HEK293 (cell line): ENCODE measurements at regions of chr2 and their contacts with region 1.

Region 1: GRCh38 chr2:199861132-199861774 is 10.3 kb upstream of the FTCDNL1 start:
- H3K4me3 ChIP-seq: no peak overlapping the region
- H3K27ac ChIP-seq: no peak overlapping the region
- H3K4me1 ChIP-seq: no peaks in the 10 kb centered on the region
- CTCF ChIP-seq: no peak

Region 2: GRCh38 chr2:199693861-199694260 is 167.4 kb before region 1 on chr2:
- CTCF ChIA-PET with region 1: interaction called, 10 read pairs
- POLR2A ChIA-PET with region 1: no interaction called
- H3K4me3 ChIP-seq: no peak overlapping the region
- H3K27ac ChIP-seq: no peak overlapping the region
- H3K4me1 ChIP-seq: peaks cover 3% of the 10 kb centered on the region; the same call in 1 of the 2 replicates
- CTCF ChIP-seq: no peak

Region 3: DNA sequence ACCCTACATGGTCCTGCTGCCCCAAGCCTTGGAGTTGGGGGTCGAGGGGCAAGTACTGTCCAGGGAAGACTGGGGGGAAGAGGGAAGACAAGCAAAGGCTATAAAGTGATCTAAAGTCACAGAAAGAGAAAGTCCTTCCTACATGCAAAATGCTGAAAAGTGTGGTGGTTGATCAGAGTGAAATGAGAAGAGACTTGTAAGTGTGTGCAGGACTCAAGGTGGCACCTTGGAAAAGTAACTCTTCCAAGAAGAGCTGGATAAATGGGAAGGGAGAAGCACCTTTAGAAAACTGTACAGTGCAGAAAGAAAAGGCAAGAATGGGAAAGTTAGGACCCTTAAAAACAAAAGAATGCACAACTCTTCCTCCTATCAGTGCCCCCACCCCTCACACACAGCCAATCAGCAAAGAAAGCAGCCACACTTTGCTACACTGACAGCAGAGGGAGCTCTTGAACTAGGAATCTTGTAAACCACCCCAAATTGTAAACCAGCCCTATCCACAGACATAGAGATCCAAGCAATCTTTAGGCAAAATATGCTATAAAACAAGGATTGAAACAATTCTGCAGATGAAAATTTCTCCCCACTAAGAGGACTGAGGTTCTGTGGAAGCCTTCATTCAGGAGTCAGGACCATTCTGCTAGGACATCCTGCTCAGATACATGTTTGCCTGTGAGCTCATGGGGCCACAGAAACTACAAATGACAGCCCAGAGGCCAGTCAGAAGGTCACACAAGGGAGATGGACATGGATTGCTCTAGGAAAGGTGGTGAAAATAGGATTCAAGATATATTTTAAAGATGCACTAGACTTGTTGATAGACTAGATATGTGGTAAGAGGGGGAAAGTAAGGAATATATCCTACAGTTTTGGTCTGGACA is 156.7 kb before region 1 on chr2:
- CTCF ChIA-PET with region 1: interaction called, 22 read pairs
- POLR2A ChIA-PET with region 1: no interaction called
- H3K4me3 ChIP-seq: no peak overlapping the region
- H3K27ac ChIP-seq: no peak overlapping the region
- H3K4me1 ChIP-seq: no peaks in the 10 kb centered on the region
- CTCF ChIP-seq: peak; percentile 90

Region 4: GRCh38 chr2:199757233-199757870 is 103.9 kb before region 1 on chr2:
- CTCF ChIA-PET with region 1: no interaction called
- POLR2A ChIA-PET with region 1: no interaction called
- H3K4me3 ChIP-seq: no peak overlapping the region
- H3K27ac ChIP-seq: no peak overlapping the region
- H3K4me1 ChIP-seq: no peaks in the 10 kb centered on the region
- CTCF ChIP-seq: no peak

Region 5: DNA sequence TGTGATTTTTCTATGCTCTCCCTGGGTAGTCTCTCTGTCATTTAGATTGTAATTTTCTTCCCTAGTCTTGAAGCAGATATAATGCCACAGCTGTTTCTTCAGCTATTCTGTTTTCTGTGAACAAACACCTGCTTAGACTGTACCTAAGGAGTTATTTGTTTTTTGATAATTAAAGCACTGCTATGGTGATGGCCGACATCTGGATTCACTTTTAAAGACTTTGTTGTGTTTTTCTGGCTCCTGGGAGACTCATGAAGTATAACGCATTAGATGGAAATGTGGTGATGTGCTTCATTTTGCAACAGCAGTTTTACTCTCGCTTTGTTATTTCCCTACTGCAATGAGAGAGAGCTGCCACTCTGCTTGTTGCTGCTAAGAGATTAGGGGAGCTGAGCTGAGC is 34.2 kb after region 1 on chr2:
- CTCF ChIA-PET with region 1: no interaction called
- POLR2A ChIA-PET with region 1: no interaction called
- H3K4me3 ChIP-seq: no peak overlapping the region
- H3K27ac ChIP-seq: no peak overlapping the region
- H3K4me1 ChIP-seq: peaks cover 6% of the 10 kb centered on the region; the same call in 1 of the 2 replicates
- CTCF ChIP-seq: no peak

Region 6: DNA sequence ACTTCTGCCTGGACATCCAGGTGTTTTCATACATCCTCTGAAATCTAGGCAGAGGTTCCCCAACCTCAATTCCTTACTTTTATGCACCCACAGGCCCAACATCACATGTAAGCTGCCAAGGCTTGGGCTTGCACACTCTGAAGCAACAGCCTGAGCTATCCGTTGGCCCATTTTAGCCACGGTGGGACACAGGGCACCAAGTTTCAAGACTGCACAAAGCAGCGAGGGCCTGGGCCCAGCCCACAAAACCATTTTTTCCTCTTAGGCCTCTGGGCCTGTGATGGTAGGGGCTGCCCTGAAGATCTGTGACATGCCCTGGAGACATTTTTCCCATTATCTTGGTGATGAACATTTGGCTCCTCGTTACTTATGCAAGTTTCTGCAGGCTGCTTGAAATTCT is 55.7 kb after region 1 on chr2:
- CTCF ChIA-PET with region 1: no interaction called
- POLR2A ChIA-PET with region 1: no interaction called
- H3K4me3 ChIP-seq: no peak overlapping the region
- H3K27ac ChIP-seq: no peak overlapping the region
- H3K4me1 ChIP-seq: no peaks in the 10 kb centered on the region; the same call in 1 of the 2 replicates
- CTCF ChIP-seq: no peak

Region 7: DNA sequence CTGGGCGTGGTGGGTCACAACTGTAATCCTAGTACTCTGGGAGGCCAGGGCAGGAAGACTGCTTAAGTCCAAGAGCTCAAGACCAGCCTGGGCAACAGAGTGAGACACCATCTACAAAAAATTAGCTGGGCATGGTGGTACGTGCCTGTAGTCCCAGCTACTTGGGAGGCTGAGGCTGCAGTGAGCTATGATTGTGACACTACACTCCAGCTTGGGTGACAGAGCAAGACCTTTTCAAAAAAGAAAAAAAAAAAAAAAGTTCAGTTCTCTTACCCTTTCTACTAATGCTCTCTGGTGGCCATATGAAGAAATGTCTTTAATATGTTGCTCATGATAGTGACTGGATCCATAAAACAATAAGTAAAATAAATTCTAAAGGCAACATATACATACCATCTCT is 79.1 kb after region 1 on chr2:
- CTCF ChIA-PET with region 1: interaction called, 11 read pairs
- POLR2A ChIA-PET with region 1: no interaction called
- H3K4me3 ChIP-seq: no peak overlapping the region
- H3K27ac ChIP-seq: no peak overlapping the region
- H3K4me1 ChIP-seq: no peaks in the 10 kb centered on the region
- CTCF ChIP-seq: peak; percentile 58